ENCODE measurements at regions of chr10 and their contacts with region 1.

Region 1: DNA sequence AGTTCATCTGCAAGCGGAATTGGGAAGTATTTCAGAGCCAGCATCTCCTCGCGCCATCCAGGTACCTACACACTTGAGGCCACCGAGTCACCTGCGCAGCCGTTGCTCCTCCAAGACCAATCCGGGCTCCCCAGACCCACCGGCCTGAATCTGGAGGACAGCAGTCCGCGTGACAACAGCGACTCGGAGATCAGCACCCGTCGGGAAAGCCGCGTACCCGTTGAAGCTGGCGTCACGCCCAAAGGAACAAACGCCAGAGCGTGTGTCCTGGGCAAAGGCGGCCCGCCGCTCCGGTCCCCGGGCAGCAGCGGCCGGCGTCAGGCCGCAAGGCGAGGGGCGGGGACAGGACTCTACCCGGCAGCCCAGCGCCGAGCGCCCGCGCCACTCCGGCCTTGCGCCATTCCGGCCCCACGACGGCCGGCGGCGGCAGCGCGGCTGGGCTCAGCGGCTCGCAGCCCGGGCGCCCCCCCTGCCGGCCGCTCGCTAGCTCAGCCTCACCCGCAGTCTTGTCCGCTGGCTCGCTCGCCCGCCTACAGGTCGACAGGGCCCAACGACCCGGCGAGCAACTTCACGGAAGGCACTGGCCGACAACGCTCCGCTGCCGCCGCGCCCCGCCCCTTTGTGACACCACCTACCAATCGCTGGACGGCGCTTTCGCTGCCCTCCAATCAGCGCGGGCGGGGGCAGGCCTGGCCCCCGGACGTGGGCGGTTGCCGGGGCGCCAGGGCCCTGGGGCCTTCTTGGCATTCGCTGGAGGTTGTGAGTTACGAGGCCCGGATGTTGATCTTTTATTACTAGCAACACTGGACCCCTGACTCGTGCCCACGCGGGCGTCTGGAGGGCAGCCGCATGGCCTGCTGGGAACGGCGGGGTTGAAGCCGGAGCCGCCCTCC is at the start of gene ZFAND4:
- DNase-seq: peak; percentile 99
- ATAC-seq: peak; percentile 98 to 99
- total RNA-seq, gene ZFAND4: 14.0 to 15.0 TPM

Region 2: GRCh38 chr10:45464958-45465567 is 207.4 kb before region 1 on chr10:
- intact Hi-C with region 1: loop called in 1 of 2 experiments (anchors 1 kb)
- DNase-seq: peak; percentile 80
- ATAC-seq: peak; percentile 93 to 95

Region 3: DNA sequence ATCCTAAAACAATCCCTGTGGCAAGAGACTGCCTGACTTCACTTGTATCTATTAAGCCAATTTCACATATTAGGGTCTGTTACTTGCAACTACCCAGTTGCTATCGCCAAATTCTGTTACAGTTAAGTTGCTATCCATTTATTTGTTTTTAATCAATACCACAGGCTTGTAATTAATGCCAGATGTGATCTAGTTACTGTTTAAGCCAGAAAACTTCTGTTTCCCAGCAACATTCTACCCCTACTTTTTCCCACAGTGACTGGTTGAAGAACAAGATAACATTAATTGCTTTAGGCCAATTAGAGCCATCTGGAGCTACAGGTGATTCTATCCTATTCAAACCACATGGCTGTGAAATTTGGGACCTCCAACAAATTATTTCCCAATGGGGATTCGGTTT is 167.1 kb before region 1 on chr10:
- intact Hi-C with region 1: no loop called
- DNase-seq: no peak
- ATAC-seq: no peak

Region 4: DNA sequence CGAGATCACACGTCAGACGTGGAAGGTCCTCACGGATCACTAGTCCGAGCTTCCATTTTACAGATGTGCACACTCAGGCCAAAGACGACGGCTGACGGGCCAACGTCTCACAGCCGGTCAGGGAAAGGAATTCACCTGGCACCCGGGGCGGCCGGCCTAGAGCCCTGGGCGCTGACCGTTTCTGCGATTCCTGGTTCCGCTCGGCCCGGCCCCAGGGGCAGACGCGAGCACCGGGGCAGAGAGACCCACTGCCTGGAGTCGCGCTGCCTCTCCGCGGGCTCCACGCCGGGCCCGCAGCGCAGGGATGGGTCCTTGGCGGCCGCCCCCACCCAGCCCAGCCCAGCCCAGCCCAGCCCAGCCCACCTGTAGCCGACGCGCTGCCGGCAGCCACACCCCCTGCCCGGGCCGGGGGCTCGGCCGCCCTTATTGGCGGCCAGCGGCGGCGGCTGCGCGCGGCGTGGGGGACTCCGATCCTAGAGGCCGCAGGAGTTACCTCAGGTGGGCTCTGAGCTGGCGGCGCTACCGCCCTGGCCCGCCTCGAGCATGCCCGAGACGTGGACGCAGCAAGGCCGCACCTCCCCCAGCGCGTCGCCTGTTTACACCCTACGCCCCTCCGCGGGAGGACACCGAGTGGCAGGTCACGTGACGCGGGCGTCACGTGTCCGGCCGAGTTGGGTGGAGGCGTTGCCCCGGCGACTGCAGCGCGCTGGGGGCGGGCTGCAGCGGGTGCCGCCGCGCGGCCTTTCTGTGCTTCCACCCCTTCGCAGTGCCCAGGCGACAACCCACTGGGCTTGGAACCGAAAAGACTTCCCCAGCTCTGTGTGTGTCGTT is 77.9 kb before region 1 on chr10:
- intact Hi-C with region 1: loop called in 1 of 2 experiments (anchors 10 kb)
- DNase-seq: peak; percentile 93
- ATAC-seq: peak; percentile 99

Region 5: DNA sequence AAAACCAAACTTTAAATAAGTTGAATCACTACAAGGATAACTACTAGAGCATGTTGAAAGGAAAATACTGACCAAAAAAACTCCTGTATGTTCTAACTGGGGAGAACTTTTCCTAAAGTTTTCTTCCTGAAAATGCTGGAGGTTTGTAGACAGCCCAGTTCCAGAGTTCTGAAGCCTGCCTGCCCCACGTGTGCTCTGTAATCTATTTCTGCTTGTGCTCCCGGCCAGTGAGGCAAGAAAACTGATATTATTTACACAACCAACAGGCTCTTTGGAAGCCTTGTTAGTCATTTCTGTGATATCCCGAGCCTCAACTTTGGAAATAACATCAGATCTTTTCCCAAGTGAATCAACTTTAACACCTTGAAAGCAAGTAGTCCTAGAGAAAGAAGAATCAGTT is 46.5 kb before region 1 on chr10:
- intact Hi-C with region 1: loop called in 1 of 2 experiments (anchors 2 kb)
- DNase-seq: no peak
- ATAC-seq: peak in 1 of 2 donors; percentile 38

Measured in left cardiac atrium (tissue), 4 donors.